Caco-2 (cell line): ENCODE measurements at regions of chr17 and their contacts with region 1.

Region 1: DNA sequence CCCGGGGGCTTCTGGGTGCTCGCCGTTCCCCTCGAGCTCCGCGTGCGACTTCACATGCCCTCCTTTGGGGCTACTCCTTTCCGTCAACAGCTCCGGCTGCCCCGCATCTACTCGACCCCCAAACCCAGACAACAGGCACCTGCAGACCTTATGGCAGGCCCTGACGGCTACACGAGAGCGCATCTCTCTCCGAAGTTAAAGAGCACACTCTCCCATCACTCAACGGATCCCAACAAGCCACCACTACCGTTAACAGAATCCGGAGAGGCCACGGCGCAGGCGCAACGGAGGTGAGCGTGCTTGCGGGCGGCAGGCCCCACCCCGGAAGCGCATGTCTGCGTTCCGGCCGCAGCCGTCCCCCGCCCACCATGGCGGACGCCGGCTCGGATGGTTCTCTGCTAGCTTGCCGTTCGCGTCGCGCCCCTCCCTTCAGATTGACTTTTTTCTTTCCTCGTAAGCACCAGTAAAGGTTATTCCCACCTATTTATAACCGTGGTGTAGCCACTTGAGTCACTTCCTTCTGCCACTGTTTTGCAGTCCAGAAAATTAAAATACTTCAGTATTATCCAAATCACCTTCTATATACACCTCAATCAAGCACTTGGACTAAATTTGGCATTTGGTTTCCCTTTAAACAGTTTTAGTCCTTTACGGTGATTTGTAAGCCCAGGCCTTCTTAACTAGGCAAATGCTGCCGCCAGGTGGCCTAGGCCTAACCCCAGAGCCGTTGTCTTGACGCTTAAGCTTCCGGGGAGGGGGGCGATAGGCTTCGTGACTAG is at the start of gene POLG2:
- DNase-seq: peak; percentile 94 to 96
- H3K4me3 ChIP-seq: peak within 1 kb of the TSS; percentile 55
- H3K4me3 Mint-ChIP-seq: peak within 1 kb of the TSS; percentile 96
- H3K27ac Mint-ChIP-seq: peak within 1 kb of the TSS; percentile 92
- H3K4me1 ChIP-seq: peaks cover 26% of the 10 kb centered on the region
- H3K4me1 Mint-ChIP-seq: peaks cover 51% of the 10 kb centered on the region
- H3K27me3 ChIP-seq: no peaks in the 10 kb centered on the region
- H3K27me3 Mint-ChIP-seq: no peaks in the 10 kb centered on the region
- CTCF ChIP-seq: peak; percentile 70 to 71
- total RNA-seq, gene POLG2: 28.9 and 32.9 TPM in 2 replicates

Region 2: GRCh38 chr17:64297467-64298098 is 199.4 kb before region 1 on chr17:
- CTCF ChIA-PET with region 1: no interaction called
- POLR2A ChIA-PET with region 1: no interaction called
- intact Hi-C with region 1: no loop called
- DNase-seq: no peak
- H3K4me3 ChIP-seq: no peak overlapping the region
- H3K4me3 Mint-ChIP-seq: no peak overlapping the region
- H3K27ac Mint-ChIP-seq: no peak overlapping the region
- H3K4me1 ChIP-seq: peaks cover 19% of the 10 kb centered on the region
- H3K4me1 Mint-ChIP-seq: peaks cover 22% of the 10 kb centered on the region
- H3K27me3 ChIP-seq: no peaks in the 10 kb centered on the region
- H3K27me3 Mint-ChIP-seq: no peaks in the 10 kb centered on the region
- CTCF ChIP-seq: no peak

Region 3: GRCh38 chr17:64580384-64581315 is 83.7 kb after region 1 on chr17:
- CTCF ChIA-PET with region 1: no interaction called
- POLR2A ChIA-PET with region 1: no interaction called
- intact Hi-C with region 1: no loop called
- DNase-seq: no peak
- H3K4me3 ChIP-seq: no peak overlapping the region
- H3K4me3 Mint-ChIP-seq: no peak overlapping the region
- H3K27ac Mint-ChIP-seq: no peak overlapping the region
- H3K4me1 ChIP-seq: no peaks in the 10 kb centered on the region
- H3K4me1 Mint-ChIP-seq: no peaks in the 10 kb centered on the region
- H3K27me3 ChIP-seq: no peaks in the 10 kb centered on the region
- H3K27me3 Mint-ChIP-seq: no peaks in the 10 kb centered on the region
- CTCF ChIP-seq: no peak

Region 4: GRCh38 chr17:64653325-64653984 is 156.5 kb after region 1 on chr17:
- CTCF ChIA-PET with region 1: interaction called, 7 read pairs
- POLR2A ChIA-PET with region 1: no interaction called
- intact Hi-C with region 1: loop called (anchors 1 kb)
- DNase-seq: no peak
- H3K4me3 ChIP-seq: no peak overlapping the region
- H3K4me3 Mint-ChIP-seq: no peak overlapping the region
- H3K27ac Mint-ChIP-seq: peak overlapping the region; percentile 2
- H3K4me1 ChIP-seq: no peaks in the 10 kb centered on the region
- H3K4me1 Mint-ChIP-seq: no peaks in the 10 kb centered on the region
- H3K27me3 ChIP-seq: no peaks in the 10 kb centered on the region
- H3K27me3 Mint-ChIP-seq: no peaks in the 10 kb centered on the region
- CTCF ChIP-seq: no peak